Endothelial cell of umbilical vein (primary cell): ENCODE measurements at regions of chr14 and their contacts with region 1.

Region 1: DNA sequence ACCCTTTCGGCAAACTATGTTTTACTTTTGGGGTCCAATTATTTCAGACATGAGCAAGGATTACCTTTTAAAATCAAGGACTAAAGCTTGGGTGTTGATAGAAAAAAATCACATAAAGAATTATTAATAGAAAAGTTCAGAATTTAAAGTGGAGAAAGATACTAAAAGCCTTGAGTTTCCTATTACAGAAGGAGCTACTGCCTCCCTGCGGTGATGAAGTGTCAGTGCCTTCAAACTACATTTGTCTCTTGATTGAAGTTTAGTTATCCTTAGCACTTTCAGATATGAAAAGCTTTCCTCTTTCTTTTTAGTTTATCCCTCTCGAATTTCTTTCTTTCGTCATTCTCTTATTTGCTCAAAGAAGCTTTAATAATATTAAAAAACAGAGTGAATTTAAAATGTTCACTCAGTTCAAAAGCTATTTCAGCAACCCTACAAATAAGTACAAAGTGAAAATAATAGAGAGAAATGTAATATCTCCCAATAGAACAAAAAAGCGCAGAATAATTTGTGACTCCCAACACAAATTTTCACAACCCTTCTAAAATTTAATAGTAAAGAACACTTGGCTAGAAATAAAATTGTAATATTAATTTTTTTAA is 87.6 kb downstream of the SEC23A start:
- DNase-seq: peak; percentile 76
- H3K4me3 ChIP-seq: no peak overlapping the region
- H3K27ac ChIP-seq: no peak overlapping the region
- H3K4me1 ChIP-seq: no peaks in the 10 kb centered on the region
- H3K27me3 ChIP-seq: no peaks in the 10 kb centered on the region
- CTCF ChIP-seq: peak; percentile 64 to 72
- POLR2A ChIP-seq: no peak

Region 2: GRCh38 chr14:37903343-37904191 is 1111.9 kb before region 1 on chr14:
- CTCF ChIA-PET with region 1: interaction called, 27 read pairs
- POLR2A ChIA-PET with region 1: no interaction called
- dilution Hi-C with region 1: no loop called
- intact Hi-C with region 1: loop called (anchors 2 kb)
- DNase-seq: peak; percentile 64
- H3K4me3 ChIP-seq: no peak overlapping the region
- H3K27ac ChIP-seq: no peak overlapping the region
- H3K4me1 ChIP-seq: peaks cover 3% of the 10 kb centered on the region
- H3K27me3 ChIP-seq: peaks cover 22 to 23% of the 10 kb centered on the region in 2 experiments
- CTCF ChIP-seq: peak; percentile 33 to 45
- POLR2A ChIP-seq: no peak

Region 3: GRCh38 chr14:38255673-38256532 is 759.6 kb before region 1 on chr14 and contains the start of gene CLEC14A:
- CTCF ChIA-PET with region 1: interaction called, 12 read pairs
- POLR2A ChIA-PET with region 1: no interaction called
- dilution Hi-C with region 1: no loop called
- intact Hi-C with region 1: loop called (anchors 1 kb)
- DNase-seq: peak; percentile 100
- H3K4me3 ChIP-seq: peak within 1 kb of the TSS; percentile 86 to 100 (median 99)
- H3K27ac ChIP-seq: peak within 1 kb of the TSS; percentile 89
- H3K4me1 ChIP-seq: peaks cover 20% of the 10 kb centered on the region
- H3K27me3 ChIP-seq: no peaks in the 10 kb centered on the region
- CTCF ChIP-seq: no peak
- POLR2A ChIP-seq: peak; percentile 87
- total RNA-seq, gene CLEC14A: 396 and 414 TPM in 2 replicates

Region 4: DNA sequence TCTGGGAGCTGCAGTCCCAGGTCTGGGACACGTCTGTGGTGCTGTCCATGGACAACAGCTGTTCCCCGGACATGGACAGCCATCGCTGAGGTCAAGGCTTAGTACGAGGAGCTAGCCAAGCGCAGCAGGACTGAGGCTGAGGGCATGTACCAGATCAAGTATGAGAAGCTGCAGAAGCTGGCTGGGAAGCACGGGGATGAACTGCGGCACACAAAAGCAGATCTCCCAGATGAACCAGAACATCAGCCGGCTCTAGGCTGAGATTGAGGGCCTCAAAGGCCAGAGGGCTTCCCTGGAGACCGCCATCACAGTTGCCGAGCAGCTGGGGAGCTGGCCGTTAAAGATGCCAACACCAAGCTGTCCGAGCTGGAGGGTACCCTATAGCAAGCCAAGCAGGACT is 287.7 kb before region 1 on chr14:
- CTCF ChIA-PET with region 1: interaction called, 167 read pairs
- POLR2A ChIA-PET with region 1: no interaction called
- dilution Hi-C with region 1: no loop called
- intact Hi-C with region 1: no loop called
- DNase-seq: no peak
- H3K4me3 ChIP-seq: no peak overlapping the region
- H3K27ac ChIP-seq: no peak overlapping the region
- H3K4me1 ChIP-seq: no peaks in the 10 kb centered on the region
- H3K27me3 ChIP-seq: no peaks in the 10 kb centered on the region
- CTCF ChIP-seq: no peak
- POLR2A ChIP-seq: no peak

Region 5: GRCh38 chr14:38880643-38881524 is 134.6 kb before region 1 on chr14:
- CTCF ChIA-PET with region 1: interaction called, 21 read pairs
- POLR2A ChIA-PET with region 1: no interaction called
- dilution Hi-C with region 1: no loop called
- intact Hi-C with region 1: no loop called
- DNase-seq: peak; percentile 92
- H3K4me3 ChIP-seq: no peak overlapping the region
- H3K27ac ChIP-seq: no peak overlapping the region
- H3K4me1 ChIP-seq: no peaks in the 10 kb centered on the region
- H3K27me3 ChIP-seq: no peaks in the 10 kb centered on the region
- CTCF ChIP-seq: no peak
- POLR2A ChIP-seq: no peak

Region 6: DNA sequence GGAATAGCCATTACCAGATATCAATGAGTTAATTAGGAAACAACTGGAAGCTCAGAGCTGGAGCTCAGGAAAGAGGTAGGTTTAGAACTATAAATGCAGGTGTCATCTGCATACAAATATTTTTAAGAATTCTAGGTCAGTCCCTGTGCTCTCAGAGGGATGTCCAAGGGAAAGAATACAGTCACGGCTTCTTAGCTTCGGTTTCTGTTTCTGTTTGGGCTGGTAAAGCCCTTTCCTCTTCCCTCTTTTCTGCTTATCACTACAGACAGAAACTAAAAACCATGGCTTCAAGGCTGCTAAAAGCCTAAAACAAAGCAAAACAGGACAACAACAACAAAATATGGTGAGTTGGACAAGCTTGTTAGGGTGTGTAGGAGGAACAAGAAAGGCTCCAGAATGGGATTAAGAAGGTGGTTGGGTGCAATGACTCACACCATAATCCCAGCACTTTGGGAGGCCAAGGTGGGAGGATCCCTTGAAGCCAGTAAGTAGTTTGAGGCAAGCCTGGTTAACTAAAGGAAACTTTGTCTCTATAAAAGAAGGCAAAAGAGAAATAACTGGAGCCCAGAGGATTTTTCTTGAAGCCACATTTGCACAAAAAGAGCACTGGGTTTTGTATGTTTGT is 25.4 kb before region 1 on chr14:
- CTCF ChIA-PET with region 1: interaction called, 12 read pairs
- POLR2A ChIA-PET with region 1: no interaction called
- dilution Hi-C with region 1: no loop called
- intact Hi-C with region 1: loop called (anchors 1 kb)
- DNase-seq: peak; percentile 15
- H3K4me3 ChIP-seq: no peak overlapping the region
- H3K27ac ChIP-seq: no peak overlapping the region
- H3K4me1 ChIP-seq: peaks cover 38% of the 10 kb centered on the region
- H3K27me3 ChIP-seq: no peaks in the 10 kb centered on the region
- CTCF ChIP-seq: no peak
- POLR2A ChIP-seq: no peak